Heart right ventricle (tissue), 16 donors: ENCODE measurements at regions of chr1 and their contacts with region 1.

Region 1: DNA sequence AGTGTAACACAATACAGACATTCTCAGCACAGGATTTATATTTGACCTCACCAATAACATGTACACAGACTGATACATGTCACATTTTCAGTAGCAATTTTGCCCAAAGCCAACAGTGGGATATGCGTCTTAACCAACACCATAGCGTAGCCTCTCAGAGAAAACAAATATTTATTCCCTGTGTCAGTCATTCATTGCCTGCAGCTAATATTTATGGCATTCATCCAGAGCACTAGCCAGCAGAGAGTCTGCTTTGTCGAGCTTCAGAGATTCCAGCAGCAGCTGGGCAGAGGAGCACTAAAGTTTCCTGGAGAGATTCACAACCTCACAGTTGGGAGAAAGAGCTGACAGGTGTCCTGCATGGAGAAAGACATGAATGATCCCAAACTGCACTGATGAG is 400.7 kb upstream of the DAB1 start:
- DNase-seq: no peak
- ATAC-seq: no peak
- H3K4me3 ChIP-seq: no peak overlapping the region
- H3K27ac ChIP-seq: no peak overlapping the region
- H3K4me1 ChIP-seq: no peaks in the 10 kb centered on the region
- H3K27me3 ChIP-seq: no peaks in the 10 kb centered on the region
- CTCF ChIP-seq: no peak

Region 2: DNA sequence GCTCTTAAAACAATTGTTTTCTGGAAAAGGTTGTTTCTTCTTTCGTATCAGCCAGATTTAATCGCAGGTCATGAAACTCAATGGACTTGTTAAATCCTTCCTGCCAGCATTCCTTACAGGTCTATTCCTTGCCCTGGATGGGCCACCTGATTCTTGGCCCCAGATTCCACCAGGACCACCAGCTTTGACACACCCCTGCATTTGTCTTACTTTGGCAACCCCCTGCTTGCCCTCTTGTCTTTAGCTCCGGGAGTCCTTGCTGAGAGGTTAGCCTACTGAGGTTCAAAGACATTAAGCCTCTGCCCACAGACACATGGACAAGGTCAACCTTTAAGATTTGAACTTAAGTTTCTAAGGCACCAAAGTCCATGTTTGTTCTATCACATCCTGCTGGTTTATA is 373.6 kb before region 1 on chr1:
- intact Hi-C with region 1: loop called in 1 of 10 experiments (anchors 5 kb)
- DNase-seq: no peak
- ATAC-seq: no peak
- H3K4me3 ChIP-seq: no peak overlapping the region
- H3K27ac ChIP-seq: no peak overlapping the region
- H3K4me1 ChIP-seq: no peaks in the 10 kb centered on the region
- H3K27me3 ChIP-seq: no peaks in the 10 kb centered on the region
- CTCF ChIP-seq: no peak

Region 3: GRCh38 chr1:57761628-57762027 is 62.9 kb before region 1 on chr1:
- intact Hi-C with region 1: loop called in 1 of 10 experiments (anchors 10 kb)
- DNase-seq: no peak
- ATAC-seq: no peak
- H3K4me3 ChIP-seq: no peak overlapping the region
- H3K27ac ChIP-seq: no peak overlapping the region
- H3K4me1 ChIP-seq: no peaks in the 10 kb centered on the region
- H3K27me3 ChIP-seq: no peaks in the 10 kb centered on the region
- CTCF ChIP-seq: no peak